ENCODE measurements at regions of chr4 and their contacts with region 1.

Region 1: DNA sequence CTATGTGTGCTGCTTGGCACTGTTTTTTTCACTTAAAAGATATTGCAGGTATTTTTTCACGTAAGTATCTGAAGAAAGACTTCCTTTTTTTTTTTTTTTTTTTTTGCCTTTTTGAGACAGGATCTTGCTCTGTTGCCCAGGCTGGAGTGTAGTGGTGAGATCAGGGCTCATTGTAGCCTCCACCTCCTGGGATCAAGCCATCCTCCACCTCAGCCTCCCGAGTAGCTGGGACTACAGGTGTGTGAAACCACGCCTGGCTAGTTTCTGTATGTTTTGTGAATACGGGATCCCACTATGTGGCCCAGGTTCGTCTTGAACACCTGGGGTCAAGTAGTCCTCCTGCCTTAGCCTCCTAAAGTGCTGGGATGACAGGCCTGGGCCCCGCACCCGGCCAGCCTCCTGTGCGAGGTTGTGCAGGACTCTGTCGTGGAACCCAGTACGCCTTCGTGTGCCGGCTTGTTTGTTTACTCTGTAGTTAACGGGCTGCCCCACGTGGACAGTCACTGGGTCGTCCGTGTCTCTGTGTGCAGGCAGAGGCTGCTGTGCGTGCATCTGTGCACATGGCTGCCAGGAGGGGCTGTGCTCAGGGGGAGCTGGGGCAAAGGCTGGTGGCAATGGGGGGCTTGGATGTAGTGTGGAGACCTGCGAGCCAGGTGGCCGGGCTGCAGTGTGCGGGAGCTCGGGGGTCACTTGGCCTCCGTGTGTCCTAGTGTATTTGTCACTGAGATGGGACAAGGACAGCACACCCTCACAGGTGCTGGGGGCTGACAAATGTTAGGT is 179.5 kb downstream of the ADRA2C start:
- DNase-seq: no peak
- ATAC-seq: no peak
- H3K4me3 Mint-ChIP-seq: no peak overlapping the region
- H3K27ac Mint-ChIP-seq: no peak overlapping the region
- H3K4me1 Mint-ChIP-seq: peaks cover 10% of the 10 kb centered on the region
- H3K27me3 Mint-ChIP-seq: peaks cover 2% of the 10 kb centered on the region
- CTCF ChIP-seq: no peak

Region 2: DNA sequence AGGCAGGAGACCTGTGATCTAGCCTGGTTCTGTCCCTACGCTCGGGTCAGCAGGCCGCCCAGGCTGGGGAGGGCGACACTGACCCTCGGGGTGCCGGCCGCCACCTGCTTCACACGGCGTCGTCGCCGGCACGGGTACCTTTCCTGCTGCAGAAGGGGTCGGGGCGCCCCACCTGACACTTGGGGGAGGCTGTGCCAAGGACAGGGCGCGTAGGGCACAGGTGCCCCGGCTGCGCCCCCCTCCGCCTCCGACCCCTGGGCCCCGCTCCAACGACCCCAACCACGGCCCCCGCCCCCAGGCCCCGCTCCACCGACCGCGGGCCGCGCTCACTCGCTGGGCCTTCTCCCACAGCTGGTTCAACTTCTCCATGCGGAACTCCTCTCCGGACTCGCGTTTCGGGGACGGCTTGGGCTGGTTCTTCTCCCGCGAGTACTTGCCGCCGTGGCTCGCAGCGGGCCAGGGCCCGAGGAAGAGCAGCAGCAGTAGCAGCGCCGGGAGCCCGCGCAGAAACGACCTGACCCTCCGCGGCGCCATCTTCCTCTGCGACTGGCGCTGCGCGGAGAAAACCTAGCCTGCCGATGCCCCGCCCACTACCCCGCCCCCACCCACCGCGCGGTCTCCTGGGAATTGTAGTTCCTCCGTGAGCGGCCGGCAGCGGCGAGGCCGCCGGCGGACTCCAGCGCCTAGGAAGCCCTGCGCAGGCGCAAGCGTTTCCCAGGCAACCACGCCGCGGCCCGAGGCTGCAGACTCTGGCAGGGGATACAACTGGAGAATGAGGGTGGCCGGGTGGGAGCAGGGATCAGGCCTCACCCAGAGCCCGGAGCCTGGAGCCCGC is 413.6 kb before region 1 on chr4 and contains the start of gene LRPAP1:
- CTCF ChIA-PET with region 1: no interaction called
- POLR2A ChIA-PET with region 1: no interaction called
- intact Hi-C with region 1: no loop called
- DNase-seq: peak; percentile 91
- ATAC-seq: peak; percentile 89
- H3K4me3 Mint-ChIP-seq: peak within 1 kb of the TSS; percentile 99
- H3K27ac Mint-ChIP-seq: peak within 1 kb of the TSS; percentile 94
- H3K4me1 Mint-ChIP-seq: peaks cover 42% of the 10 kb centered on the region
- H3K27me3 Mint-ChIP-seq: no peaks in the 10 kb centered on the region
- CTCF ChIP-seq: no peak
- total RNA-seq, gene LRPAP1: 60.9 and 62.9 TPM in 2 replicates

Region 3: GRCh38 chr4:3756342-3757059 is 189.2 kb before region 1 on chr4:
- CTCF ChIA-PET with region 1: no interaction called
- POLR2A ChIA-PET with region 1: interaction called, 13 read pairs
- intact Hi-C with region 1: no loop called
- DNase-seq: no peak
- ATAC-seq: no peak
- H3K4me3 Mint-ChIP-seq: no peak overlapping the region
- H3K27ac Mint-ChIP-seq: no peak overlapping the region
- H3K4me1 Mint-ChIP-seq: no peaks in the 10 kb centered on the region
- H3K27me3 Mint-ChIP-seq: peaks cover 5% of the 10 kb centered on the region
- CTCF ChIP-seq: no peak

Region 4: GRCh38 chr4:3911252-3911856 is 34.3 kb before region 1 on chr4:
- CTCF ChIA-PET with region 1: no interaction called
- POLR2A ChIA-PET with region 1: no interaction called
- intact Hi-C with region 1: no loop called
- DNase-seq: no peak
- ATAC-seq: no peak
- H3K4me3 Mint-ChIP-seq: no peak overlapping the region
- H3K27ac Mint-ChIP-seq: no peak overlapping the region
- H3K4me1 Mint-ChIP-seq: no peaks in the 10 kb centered on the region
- H3K27me3 Mint-ChIP-seq: peaks cover 8% of the 10 kb centered on the region
- CTCF ChIP-seq: no peak

Measured in activated B cell treated with CpG ODN at 0.5 μM for 24 hours (primary cell).